A549 (cell line): ENCODE measurements at regions of chr5 and their contacts with region 1.

Region 1: GRCh38 chr5:91225848-91226686 is 157.1 kb downstream of the ARRDC3 start:
- DNase-seq: peak in 1 of 2 experiments; percentile 59
- ATAC-seq: peak; percentile 64 to 87
- H3K4me3 ChIP-seq: no peak overlapping the region
- H3K27ac ChIP-seq: peak overlapping the region in 1 of 2 experiments; percentile 39; a peak in 2 of 6 replicates
- H3K4me1 ChIP-seq: peaks cover 4% of the 10 kb centered on the region; the same call in 1 of the 3 replicates
- CTCF ChIP-seq: peak; percentile 61
- EP300 ChIP-seq: no peak
- POLR2A ChIP-seq: no peak
- RAD21 ChIP-seq: peak; percentile 88 to 91

Region 2: DNA sequence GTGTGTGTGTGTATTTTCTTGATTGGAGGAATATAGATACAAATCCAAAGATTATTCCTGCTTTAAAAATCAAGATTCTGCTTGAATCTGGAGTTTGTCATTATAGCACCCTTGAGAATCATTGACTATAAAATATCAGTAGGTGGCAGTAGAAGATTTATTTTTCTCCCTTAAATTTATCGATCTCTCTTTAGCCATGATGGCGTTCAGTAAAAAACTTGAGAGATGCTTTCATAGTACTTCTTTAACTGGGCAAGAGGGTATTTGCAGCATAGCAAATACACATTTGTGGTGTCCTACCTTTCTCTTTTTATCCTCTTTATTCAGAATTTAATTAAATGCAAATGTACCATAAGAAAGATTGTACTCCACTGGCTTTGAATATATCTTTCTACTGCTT is 359.7 kb before region 1 on chr5:
- CTCF ChIA-PET with region 1: interaction called, 13 read pairs
- POLR2A ChIA-PET with region 1: no interaction called
- DNase-seq: peak; percentile 32 to 50
- ATAC-seq: peak; percentile 69 to 85; a peak in 3 of 6 replicates
- H3K4me3 ChIP-seq: no peak overlapping the region
- H3K27ac ChIP-seq: peak overlapping the region; percentile 32 to 53; a peak in 2 of 6 replicates
- H3K4me1 ChIP-seq: peaks cover 19% of the 10 kb centered on the region
- CTCF ChIP-seq: peak; percentile 77
- EP300 ChIP-seq: no peak
- POLR2A ChIP-seq: no peak
- RAD21 ChIP-seq: peak; percentile 83 to 92